Astrocyte of the cerebellum (primary cell): ENCODE measurements at regions of chr2 and their contacts with region 1.

Region 1: DNA sequence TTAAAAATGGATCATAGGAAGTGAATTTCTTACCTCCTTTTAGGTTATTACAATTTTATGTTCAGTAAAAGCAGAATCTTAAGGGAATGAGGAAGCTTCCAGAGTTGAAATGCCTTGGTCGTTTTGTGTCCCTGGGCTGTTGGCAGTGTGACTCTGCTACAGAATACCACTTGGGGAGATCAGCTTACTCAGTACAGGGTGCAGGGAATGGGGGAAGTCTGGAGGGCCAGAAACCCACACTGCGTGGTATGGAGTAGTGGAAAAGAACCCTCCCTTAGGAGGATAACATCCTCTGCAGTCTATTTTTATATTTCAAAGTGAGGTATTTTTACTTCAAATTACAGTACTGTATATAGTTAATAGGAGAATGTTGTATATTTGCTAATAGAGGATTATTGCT is 51.1 kb downstream of the R3HDM1 start:
- DNase-seq: no peak
- H3K4me3 ChIP-seq: no peak overlapping the region
- CTCF ChIP-seq: no peak

Region 2: DNA sequence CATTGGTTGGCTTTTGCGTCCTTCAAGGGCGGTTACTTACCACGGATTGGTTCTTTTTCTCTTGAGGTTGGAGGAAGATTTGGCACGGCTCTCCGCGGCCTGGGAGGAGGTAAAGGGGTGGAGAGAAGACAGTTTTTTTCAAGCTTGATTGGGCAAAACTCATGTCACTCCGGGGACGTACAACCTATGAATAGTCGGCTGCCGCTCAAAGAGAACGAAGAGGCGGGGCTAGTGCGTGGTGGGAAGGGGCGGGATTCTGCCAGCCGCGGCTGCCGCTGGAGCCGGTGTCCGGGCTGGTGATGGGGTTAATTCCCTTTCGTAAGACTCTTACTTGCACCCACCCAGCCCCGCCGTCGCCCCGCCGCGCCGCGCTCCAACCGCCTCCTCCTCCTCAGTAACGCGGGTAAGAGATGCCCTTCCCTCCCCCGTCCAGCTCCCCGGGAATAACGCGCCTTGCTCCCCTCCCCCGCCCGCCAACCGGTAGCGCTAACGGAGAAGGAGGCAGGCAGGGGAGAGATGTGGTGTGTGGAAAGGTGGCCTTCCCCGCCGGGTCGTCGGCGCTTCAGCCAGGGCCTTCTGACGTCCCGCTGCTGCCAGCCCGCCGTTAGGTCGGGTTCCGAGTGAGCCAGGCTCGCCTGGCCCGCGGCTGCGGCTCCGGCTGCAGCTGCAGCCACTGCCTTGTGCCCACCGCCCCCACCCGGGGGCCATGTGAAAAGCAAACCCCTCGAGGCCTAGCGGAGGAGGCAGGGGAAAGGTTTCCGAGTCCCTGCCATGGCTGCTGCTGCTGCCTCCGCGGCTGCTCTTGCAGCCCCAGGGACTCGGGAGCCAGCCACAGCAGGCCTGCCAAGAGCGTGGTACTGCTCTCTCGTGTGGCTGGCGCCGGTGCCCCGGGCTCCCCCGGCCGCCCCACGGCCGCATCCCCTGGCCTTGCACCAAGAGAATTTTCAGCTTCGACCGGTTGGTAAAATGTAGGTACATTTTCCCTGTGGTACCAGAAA is 50.9 kb before region 1 on chr2 and contains the start of gene R3HDM1:
- in situ Hi-C with region 1: loop called (anchors 5 kb)
- DNase-seq: peak; percentile 100
- H3K4me3 ChIP-seq: peak within 1 kb of the TSS; percentile 62
- CTCF ChIP-seq: no peak

Region 3: DNA sequence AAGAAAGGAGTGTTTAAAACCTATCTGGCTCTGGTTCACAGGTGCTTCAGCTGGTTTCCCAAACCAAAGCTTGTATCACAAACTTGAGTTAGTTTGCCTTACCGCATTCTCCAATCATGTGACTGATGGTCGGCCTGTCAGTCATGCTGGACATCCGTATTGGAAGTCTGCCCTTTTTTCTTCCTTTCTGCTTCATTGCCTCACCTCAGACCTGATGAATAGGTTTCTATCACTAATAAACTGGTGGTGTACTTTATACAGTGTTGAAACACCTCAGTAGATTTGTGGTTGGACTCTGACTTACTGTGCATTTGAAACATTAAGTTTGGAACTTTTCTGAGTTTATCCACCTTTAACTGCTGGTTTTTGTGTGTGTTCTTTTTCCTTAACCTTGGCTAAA is 33.0 kb after region 1 on chr2:
- in situ Hi-C with region 1: no loop called
- DNase-seq: no peak
- H3K4me3 ChIP-seq: no peak overlapping the region
- CTCF ChIP-seq: no peak

Region 4: DNA sequence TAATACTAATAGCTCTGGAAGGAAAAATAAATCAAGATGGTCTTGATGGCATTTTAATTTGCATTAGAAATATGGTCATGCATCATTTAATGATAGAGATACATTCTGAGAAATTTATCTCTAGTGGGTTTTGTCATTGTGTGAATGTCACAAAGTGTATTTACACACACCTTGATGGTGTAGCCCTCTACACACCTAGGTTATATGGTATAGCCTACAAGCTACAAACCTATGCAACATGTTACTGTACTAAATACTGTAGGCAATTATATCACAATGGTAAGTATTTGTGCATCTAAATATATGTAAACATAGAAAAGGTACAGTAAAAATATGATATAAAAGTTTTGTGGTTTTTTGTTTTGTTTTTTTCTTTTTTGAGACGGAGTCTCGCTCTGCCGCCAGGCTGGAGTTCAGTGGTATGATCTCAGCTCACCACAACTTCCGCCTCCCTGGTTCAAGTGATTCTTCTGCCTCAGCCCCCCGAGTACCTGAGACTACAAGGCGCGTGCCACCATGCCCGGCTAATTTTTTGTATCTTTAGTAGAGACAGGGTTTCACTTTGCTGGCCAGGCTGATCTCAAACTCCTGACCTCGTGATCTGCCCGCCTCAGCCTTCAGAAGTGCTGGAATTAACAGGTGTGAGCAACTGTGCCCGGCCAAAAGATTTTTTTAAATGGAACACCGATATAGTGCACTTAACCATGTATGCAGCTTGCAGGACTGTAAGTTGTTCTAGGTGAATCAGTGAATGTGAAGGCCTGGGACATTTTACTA is 75.6 kb after region 1 on chr2:
- in situ Hi-C with region 1: no loop called
- DNase-seq: no peak
- H3K4me3 ChIP-seq: no peak overlapping the region
- CTCF ChIP-seq: no peak